HCT116 (cell line): ENCODE measurements at regions of chr1 and their contacts with region 1.

Region 1: DNA sequence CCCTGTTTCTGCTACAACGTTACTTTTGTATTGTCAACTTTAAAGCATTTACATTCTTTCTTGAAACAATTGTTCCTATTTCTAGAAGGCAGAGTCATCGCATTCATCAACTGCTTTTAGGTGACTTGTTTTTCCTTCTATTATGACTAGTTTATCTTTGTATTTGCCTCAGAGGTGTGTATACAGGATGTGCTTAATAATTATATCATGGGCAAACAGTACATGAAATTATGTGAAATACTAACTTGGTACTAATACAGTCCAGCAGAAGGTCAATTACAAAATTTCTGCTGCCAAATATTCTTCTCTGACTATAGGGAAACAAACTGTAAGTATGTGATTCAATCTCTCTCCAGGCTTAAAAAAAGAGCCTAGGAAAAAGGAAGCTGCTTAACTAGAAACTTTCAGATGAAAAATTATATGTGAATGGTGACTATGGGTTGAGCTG is 101.6 kb downstream of the C4BPA start:
- DNase-seq: no peak
- ATAC-seq: no peak
- H3K4me3 ChIP-seq: no peak overlapping the region
- H3K27ac ChIP-seq: peak overlapping the region; percentile 28; the same call in 1 of the 2 replicates
- H3K4me1 ChIP-seq: peaks cover 10 to 22% of the 10 kb centered on the region in 2 experiments; a peak in 3 of 4 replicates
- H3K27me3 ChIP-seq: no peaks in the 10 kb centered on the region
- CTCF ChIP-seq: no peak
- POLR2A ChIP-seq: no peak
- RAD21 ChIP-seq: no peak

Region 2: GRCh38 chr1:207103892-207104373 is 101.7 kb before region 1 on chr1 and contains the start of gene C4BPA:
- CTCF ChIA-PET with region 1: no interaction called
- POLR2A ChIA-PET with region 1: no interaction called
- RAD21 ChIA-PET with region 1: no interaction called
- intact Hi-C with region 1: no loop called
- DNase-seq: no peak
- ATAC-seq: no peak
- H3K4me3 ChIP-seq: no peak within 1 kb of the TSS
- H3K27ac ChIP-seq: no peak within 1 kb of the TSS
- H3K4me1 ChIP-seq: no peaks in the 10 kb centered on the region
- H3K27me3 ChIP-seq: no peaks in the 10 kb centered on the region
- CTCF ChIP-seq: no peak
- POLR2A ChIP-seq: no peak
- RAD21 ChIP-seq: no peak
- total RNA-seq, gene C4BPA: 0.32 TPM

Region 3: DNA sequence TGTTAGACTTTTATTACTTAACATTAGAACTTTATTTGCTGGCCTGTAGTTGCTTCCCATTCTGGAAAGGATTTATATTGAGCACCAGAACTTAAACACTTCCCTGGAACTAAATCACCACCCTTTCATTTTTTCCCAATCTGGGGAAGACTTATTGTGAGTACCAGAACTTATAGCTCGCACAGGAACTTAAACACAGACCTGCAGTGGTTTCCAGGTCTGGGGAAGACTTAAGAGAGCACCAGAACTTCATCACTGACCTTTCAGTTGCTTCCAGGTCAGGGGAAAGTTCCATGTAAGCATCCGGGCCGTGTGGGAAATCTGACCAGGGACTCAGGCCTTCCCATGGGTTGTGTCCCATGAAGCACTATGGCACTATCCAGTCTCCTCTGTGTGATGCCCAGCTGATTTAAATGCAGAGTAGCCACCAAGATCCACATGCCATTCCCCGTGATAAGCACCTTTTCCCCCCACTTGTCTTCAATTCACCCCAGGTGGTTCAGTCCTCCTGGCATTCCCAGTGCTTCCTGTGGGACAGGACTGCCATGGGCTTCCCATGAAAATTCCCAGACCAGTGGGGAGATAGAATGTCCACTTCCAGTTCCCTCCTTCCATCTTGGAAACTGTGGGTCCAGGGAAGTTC is 52.7 kb before region 1 on chr1:
- CTCF ChIA-PET with region 1: no interaction called
- POLR2A ChIA-PET with region 1: no interaction called
- RAD21 ChIA-PET with region 1: no interaction called
- intact Hi-C with region 1: loop called (anchors 1 kb)
- DNase-seq: peak; percentile 99
- ATAC-seq: peak; percentile 94
- H3K4me3 ChIP-seq: peak overlapping the region; percentile 61 to 93
- H3K27ac ChIP-seq: peak overlapping the region; percentile 92
- H3K4me1 ChIP-seq: peaks cover 2% of the 10 kb centered on the region in 2 experiments; a peak in 1 of 4 replicates
- H3K27me3 ChIP-seq: no peaks in the 10 kb centered on the region
- CTCF ChIP-seq: no peak
- POLR2A ChIP-seq: peak; percentile 72
- RAD21 ChIP-seq: 0 out of 2 replicates have a peak, but pooled peaks have one; percentile 26